ENCODE measurements at regions of chr11 and their contacts with region 1.

Region 1: DNA sequence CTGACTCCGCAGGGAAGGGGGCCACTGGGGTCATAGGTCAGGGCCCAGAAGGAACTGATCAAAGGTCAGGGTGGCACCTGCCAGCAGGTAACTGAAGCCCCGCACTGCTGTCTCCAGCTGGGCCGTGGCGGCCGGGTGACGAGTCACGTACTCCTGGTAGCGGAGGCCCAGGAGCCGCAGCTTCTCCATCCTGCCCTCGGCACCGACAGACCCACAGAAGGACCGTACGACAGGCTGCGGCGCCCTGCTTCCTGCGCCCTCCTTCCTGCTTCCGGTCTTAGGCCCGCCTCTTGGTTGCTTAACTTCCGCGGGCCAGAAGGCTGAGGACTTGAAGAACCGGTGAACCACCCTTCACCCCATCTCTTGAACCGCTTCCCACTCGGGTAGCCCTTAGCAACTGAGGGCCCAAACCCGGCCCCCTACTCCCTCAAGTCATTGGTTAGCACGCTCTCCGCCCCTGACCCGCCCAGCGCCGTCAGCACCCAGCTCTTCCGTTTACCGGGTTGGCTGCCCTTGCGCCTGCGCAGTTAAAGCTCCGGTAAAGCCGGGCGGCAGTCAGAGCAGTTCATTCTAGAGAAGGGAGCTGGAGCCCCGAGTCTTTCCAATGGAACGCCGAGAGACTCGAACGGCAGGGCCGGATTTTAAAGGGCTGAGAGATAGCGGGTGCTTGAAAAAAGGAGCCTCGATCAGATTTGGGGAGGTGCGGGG is at the start of gene PEX16:
- DNase-seq: peak; percentile 96
- ATAC-seq: peak; percentile 83
- H3K4me3 ChIP-seq: peak within 1 kb of the TSS; percentile 96
- H3K27ac ChIP-seq: peak within 1 kb of the TSS; percentile 69
- H3K4me1 ChIP-seq: peaks cover 3% of the 10 kb centered on the region; the same call in 1 of the 2 replicates
- H3K27me3 ChIP-seq: no peaks in the 10 kb centered on the region
- CTCF ChIP-seq: no peak
- total RNA-seq, gene PEX16: 43.5 and 56.7 TPM in 2 replicates

Region 2: DNA sequence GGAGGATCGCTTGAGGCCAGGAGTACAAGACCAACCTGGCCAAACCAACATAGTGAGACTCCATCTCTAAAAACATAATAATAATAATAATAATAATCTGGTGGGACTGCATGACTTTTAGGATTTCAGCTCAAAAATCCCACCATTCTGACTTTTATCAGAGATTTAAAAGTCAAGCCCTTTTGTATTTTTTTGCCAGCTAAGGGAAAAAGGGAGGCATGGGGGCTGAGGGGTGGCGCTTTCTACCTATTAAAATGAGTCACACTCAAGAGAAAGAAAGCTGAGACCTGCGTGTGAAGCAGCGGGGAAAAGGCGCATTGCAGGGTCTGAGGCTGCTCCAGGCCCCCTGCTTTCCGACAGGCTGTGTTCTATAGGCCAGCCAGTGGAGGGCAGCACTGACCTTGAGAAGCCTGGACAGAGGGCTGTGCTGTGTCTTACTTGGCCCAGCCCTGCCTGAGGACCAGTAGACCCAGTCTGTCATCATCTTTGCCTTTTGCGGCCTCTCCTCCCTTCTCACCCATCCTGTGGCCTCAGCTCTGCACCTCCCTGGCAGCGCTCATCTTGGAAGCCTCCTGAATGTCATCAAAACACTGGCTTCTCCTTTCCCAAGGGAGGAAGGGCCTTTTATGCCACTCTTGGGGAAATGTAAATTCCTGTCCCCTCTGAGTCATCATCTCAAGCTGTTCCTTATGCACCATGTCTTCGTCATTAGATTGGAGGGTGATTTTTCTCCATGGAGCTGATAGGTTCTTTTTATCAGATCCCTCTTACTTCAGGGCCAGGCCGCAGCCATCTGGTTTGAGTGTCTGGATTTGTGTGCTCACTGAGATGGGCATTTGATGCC is 45.0 kb before region 1 on chr11:
- CTCF ChIA-PET with region 1: no interaction called
- POLR2A ChIA-PET with region 1: no interaction called
- intact Hi-C with region 1: loop called (anchors 2 kb)
- DNase-seq: peak; percentile 59
- ATAC-seq: peak; percentile 78
- H3K4me3 ChIP-seq: no peak overlapping the region
- H3K27ac ChIP-seq: no peak overlapping the region; the same call in 1 of the 2 replicates
- H3K4me1 ChIP-seq: no peaks in the 10 kb centered on the region
- H3K27me3 ChIP-seq: no peaks in the 10 kb centered on the region
- CTCF ChIP-seq: peak; percentile 77

Region 3: DNA sequence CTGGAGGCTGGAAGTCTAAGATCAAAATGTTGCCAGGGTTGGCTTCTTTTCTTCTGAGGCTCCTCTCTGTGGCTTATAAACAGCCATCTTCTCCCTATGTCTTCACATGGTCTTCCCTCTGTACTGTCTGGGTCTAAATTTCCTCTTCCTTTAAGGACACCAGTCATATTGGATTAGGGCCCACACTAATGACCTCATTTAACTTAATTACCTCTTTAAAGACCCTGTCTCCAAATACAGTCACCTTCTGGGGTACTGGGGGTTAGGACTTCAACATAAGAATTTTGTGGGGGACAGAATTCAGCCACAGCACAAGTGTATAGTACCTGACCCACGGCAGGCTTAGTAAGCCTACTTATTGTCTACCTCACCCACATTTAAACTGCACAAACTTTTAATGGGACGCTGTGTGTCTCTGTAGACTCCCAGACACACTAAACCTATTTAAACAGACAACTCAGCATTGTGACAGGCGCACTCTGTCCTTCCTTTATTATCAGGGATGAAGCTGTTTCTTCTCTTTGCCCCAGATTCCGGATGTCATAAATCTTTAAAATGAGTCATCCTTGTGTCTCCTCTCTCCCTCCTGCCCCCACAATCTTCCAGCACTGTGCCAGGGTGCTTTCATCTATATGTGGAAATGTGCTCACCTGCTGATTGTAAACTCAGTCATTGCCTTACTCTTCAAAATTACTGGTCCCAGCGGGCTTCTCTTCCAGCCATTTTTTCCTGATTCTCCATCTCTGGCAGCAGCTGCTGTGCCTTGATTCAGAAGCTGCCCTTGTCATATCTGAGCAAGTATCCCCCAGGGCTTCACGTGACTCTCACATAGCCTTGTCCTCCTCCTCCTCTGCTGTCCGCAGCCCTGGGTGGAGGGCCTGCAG is 37.7 kb before region 1 on chr11:
- CTCF ChIA-PET with region 1: no interaction called
- POLR2A ChIA-PET with region 1: no interaction called
- intact Hi-C with region 1: loop called (anchors 2 kb)
- DNase-seq: peak; percentile 82
- ATAC-seq: peak; percentile 96
- H3K4me3 ChIP-seq: no peak overlapping the region
- H3K27ac ChIP-seq: peak overlapping the region; percentile 48
- H3K4me1 ChIP-seq: peaks cover 18% of the 10 kb centered on the region
- H3K27me3 ChIP-seq: no peaks in the 10 kb centered on the region
- CTCF ChIP-seq: no peak